ENCODE measurements at regions of chr11 and their contacts with region 1.

Region 1: GRCh38 chr11:75142714-75143419 is 8.0 kb upstream of the SLCO2B1 start:
- DNase-seq: peak; percentile 87
- H3K4me3 ChIP-seq: no peak overlapping the region
- H3K27ac ChIP-seq: peak overlapping the region in 6 of 8 donors; percentile 44 to 69 (median 58)
- H3K4me1 ChIP-seq: peaks cover 12 to 49% (median 32%) of the 10 kb centered on the region in 6 donors
- H3K27me3 ChIP-seq: peaks cover 0 to 4% (median 0%) of the 10 kb centered on the region in 7 donors
- CTCF ChIP-seq: peak in 4 of 11 experiments; percentile 6 to 29 (median 14)
- POLR2A ChIP-seq: no peak

Region 2: GRCh38 chr11:74870485-74870884 is 272.4 kb before region 1 on chr11:
- intact Hi-C with region 1: no loop called
- DNase-seq: no peak
- H3K4me3 ChIP-seq: no peak overlapping the region
- H3K27ac ChIP-seq: no peak overlapping the region
- H3K4me1 ChIP-seq: no peaks in the 10 kb centered on the region
- H3K27me3 ChIP-seq: no peaks in the 10 kb centered on the region
- CTCF ChIP-seq: peak in 5 of 11 experiments; percentile 17 to 37 (median 30)
- POLR2A ChIP-seq: no peak

Region 3: DNA sequence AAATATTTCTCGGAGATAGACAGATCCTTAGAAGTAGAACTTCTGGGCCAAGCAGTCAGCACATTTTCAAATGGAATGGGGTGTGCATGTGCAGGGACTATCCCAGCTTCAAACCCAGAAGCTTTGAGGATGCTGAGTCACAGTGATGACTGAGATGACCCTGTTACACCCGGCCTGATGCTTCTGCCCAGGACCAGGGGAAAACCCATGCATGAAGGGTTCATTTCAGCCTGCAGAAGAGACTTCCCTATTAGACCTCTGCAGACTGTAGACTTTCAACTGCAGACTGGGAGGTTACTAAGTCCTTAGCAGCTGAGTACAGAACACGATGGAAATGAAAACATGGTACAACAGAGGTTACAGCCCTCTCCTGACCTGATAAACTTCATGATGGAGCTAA is 42.6 kb before region 1 on chr11:
- intact Hi-C with region 1: no loop called
- DNase-seq: no peak
- H3K4me3 ChIP-seq: no peak overlapping the region
- H3K27ac ChIP-seq: no peak overlapping the region
- H3K4me1 ChIP-seq: peaks cover 0 to 4% (median 0%) of the 10 kb centered on the region in 6 donors
- H3K27me3 ChIP-seq: peaks cover 0 to 47% (median 0%) of the 10 kb centered on the region in 7 donors
- CTCF ChIP-seq: no peak
- POLR2A ChIP-seq: no peak

Region 4: GRCh38 chr11:75194147-75194785 is 51.4 kb after region 1 on chr11:
- intact Hi-C with region 1: no loop called
- DNase-seq: no peak
- H3K4me3 ChIP-seq: no peak overlapping the region
- H3K27ac ChIP-seq: no peak overlapping the region
- H3K4me1 ChIP-seq: peaks cover 0 to 29% (median 10%) of the 10 kb centered on the region in 6 donors
- H3K27me3 ChIP-seq: peaks cover 0 to 4% (median 0%) of the 10 kb centered on the region in 7 donors
- CTCF ChIP-seq: no peak
- POLR2A ChIP-seq: no peak

Region 5: DNA sequence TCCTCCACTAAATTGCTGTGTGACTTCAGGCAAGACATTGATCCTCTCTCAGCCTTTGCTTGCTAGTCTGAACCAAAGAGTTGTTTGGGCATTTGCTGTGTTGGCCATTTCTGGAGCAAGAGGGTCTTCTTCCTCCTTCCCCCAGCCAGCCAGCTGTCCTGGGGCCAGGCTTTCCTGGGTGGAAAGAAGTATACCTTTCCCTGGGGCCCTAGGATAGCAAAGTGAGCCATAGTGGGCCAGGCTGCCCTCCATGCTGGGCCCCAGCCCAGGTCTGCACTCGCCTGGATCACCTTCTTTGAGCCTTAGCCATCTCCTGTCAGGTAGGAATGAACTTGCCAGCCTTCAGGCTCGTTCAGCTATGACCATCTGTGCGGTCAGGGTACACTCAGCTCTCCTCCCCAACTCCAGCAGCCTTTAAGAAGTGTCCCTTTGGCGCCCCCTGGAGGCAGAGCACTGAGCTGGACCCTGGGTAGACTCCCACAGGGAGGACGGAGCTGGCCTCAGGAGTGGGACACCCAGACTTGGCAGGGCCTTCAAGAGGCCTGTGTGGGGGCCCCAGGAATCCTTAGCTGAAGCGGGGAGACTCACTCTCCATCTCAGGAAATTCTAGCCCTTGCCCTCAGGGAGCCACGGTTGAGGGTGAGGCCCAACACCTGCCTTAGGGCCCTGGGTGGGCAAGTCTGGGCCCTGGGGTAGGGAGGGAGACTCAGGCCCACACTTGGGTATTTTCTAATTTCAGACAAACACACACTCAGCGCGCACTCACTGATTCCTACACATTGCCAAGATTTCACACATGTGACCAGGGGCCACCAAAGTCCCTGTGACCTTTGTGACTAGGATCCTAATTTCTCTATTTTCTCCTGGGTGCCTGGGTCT is 62.1 kb after region 1 on chr11:
- intact Hi-C with region 1: loop called (anchors 5 kb)
- DNase-seq: peak; percentile 92
- H3K4me3 ChIP-seq: no peak overlapping the region
- H3K27ac ChIP-seq: peak overlapping the region in 1 of 8 donors; percentile 24
- H3K4me1 ChIP-seq: peaks cover 0 to 8% (median 0%) of the 10 kb centered on the region in 6 donors
- H3K27me3 ChIP-seq: peaks cover 0 to 17% (median 0%) of the 10 kb centered on the region in 7 donors
- CTCF ChIP-seq: peak; percentile 46 to 91 (median 84)
- POLR2A ChIP-seq: no peak

Region 6: GRCh38 chr11:75241036-75241905 is 98.4 kb after region 1 on chr11:
- intact Hi-C with region 1: loop called (anchors 5 kb)
- DNase-seq: peak; percentile 97
- H3K4me3 ChIP-seq: peak overlapping the region; percentile 6 to 84 (median 46)
- H3K27ac ChIP-seq: peak overlapping the region in 4 of 8 donors; percentile 17 to 50 (median 29)
- H3K4me1 ChIP-seq: peaks cover 0 to 25% (median 17%) of the 10 kb centered on the region in 6 donors
- H3K27me3 ChIP-seq: peaks cover 2 to 90% (median 50%) of the 10 kb centered on the region in 7 donors
- CTCF ChIP-seq: peak in 8 of 11 experiments; percentile 24 to 98 (median 94)
- POLR2A ChIP-seq: no peak

Measured in spleen (tissue), 13 donors.